HEK293 (cell line): ENCODE measurements at regions of chr12 and their contacts with region 1.

Region 1: GRCh38 chr12:71636704-71637115 is 26.9 kb downstream of the ZFC3H1 start:
- H3K4me3 ChIP-seq: no peak overlapping the region
- H3K27ac ChIP-seq: no peak overlapping the region
- H3K4me1 ChIP-seq: no peaks in the 10 kb centered on the region
- CTCF ChIP-seq: 0 out of 2 replicates have a peak, but pooled peaks have one; percentile 7

Region 2: DNA sequence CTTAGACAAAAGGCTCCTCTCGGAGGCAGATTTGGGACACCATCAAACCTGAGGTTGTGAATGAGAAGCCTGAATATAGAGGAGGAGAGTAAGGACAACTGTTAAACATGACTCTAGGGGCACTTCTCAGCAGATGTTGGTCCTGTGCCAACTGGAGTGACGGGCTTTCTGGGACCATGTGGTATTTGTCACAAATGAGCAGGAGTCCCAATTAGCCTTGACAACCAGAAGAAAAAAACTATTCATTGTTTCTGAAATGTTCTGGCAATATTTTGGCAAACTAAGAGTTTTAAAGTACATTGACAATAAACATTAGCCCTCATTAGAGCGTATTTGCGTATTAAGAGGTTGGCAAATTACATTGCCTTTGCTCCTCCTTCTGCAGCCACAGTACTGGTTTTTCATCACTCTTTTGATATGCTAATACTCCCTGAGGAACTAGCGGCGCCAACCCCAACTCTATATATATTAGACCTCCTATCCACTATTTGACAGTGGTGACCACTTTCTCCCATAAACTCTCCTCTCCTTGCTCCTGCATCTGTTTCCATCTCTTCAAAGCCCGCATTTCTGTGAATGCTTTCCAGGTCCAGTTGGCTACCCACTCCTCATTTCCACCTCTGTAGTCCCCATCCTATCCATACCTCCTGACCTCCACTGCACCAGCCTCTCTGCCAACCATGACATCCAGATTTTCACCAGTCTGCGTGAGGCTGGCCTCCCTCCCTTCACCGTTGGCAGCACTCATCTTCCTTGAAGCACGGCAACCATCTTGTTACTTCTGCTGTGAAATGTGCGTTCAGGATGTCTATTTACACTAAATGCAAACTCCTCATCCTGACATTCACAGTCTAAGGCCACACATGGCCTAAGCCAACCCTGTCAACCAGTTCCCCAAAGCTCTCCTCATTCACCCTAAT is 73.8 kb before region 1 on chr12:
- CTCF ChIA-PET with region 1: no interaction called
- POLR2A ChIA-PET with region 1: no interaction called
- H3K4me3 ChIP-seq: no peak overlapping the region
- H3K27ac ChIP-seq: no peak overlapping the region
- H3K4me1 ChIP-seq: 0 out of 2 replicates have a peak, but pooled peaks cover 3% of the 10 kb centered on the region
- CTCF ChIP-seq: no peak

Region 3: GRCh38 chr12:71626098-71626497 is 10.6 kb before region 1 on chr12:
- CTCF ChIA-PET with region 1: interaction called, 20 read pairs
- POLR2A ChIA-PET with region 1: no interaction called
- H3K4me3 ChIP-seq: no peak overlapping the region
- H3K27ac ChIP-seq: 0 out of 2 replicates have a peak overlapping the region, but pooled peaks have one; percentile 1
- H3K4me1 ChIP-seq: peaks cover 18% of the 10 kb centered on the region; the same call in 1 of the 2 replicates
- CTCF ChIP-seq: no peak

Region 4: GRCh38 chr12:71746983-71747611 is 110.4 kb after region 1 on chr12:
- CTCF ChIA-PET with region 1: interaction called, 63 read pairs
- POLR2A ChIA-PET with region 1: interaction called, 4 read pairs
- H3K4me3 ChIP-seq: no peak overlapping the region
- H3K27ac ChIP-seq: no peak overlapping the region
- H3K4me1 ChIP-seq: no peaks in the 10 kb centered on the region
- CTCF ChIP-seq: peak; percentile 25; the same call in 1 of the 2 replicates